ENCODE measurements at regions of chr4 and their contacts with region 1.

Region 1: DNA sequence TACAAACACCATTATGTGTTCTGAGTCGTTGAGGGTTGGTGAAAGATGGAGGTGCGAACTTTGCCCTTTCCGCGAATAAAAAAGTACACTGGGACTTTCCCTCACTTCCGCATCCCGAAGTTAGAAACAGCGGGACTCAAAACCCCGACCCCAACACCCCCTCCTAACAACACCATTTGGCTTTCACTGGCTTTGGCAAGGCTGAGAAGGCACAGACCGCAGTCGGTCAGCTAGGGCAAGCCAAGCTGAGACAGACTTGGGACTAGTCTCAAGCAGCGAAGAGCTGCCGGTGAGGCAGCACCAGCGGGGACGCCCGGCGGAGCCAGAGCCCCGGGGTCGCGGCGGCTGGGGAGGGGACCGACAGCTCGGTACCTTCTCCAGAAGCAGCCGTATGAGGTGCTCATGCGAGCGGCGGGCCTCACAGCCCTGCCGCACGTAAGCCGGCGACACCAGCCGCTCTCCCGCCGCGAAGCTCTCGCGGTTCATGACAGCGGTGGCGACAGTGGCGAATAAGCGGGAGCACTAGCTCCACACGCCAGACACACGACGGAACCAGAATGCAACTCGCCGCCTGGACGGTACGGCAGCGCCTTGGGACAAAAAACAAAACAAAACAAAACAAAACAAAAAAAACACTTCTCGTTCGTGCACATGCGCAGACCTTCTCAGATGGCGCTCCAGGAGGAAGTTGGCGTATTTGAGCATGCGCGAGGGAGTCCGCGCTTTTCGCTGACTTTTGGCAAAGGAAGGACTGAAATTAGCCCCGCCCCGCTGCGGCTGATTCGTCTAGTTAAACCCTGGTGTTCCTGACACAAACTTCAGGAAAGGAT is at the start of gene SEPSECS:
- DNase-seq: peak; percentile 97
- ATAC-seq: peak; percentile 87
- H3K4me3 Mint-ChIP-seq: peak within 1 kb of the TSS; percentile 83
- H3K27ac Mint-ChIP-seq: peak within 1 kb of the TSS; percentile 90
- H3K4me1 Mint-ChIP-seq: peaks cover 42% of the 10 kb centered on the region
- H3K27me3 Mint-ChIP-seq: no peaks in the 10 kb centered on the region
- total RNA-seq, gene SEPSECS: 12.9 TPM

Region 2: DNA sequence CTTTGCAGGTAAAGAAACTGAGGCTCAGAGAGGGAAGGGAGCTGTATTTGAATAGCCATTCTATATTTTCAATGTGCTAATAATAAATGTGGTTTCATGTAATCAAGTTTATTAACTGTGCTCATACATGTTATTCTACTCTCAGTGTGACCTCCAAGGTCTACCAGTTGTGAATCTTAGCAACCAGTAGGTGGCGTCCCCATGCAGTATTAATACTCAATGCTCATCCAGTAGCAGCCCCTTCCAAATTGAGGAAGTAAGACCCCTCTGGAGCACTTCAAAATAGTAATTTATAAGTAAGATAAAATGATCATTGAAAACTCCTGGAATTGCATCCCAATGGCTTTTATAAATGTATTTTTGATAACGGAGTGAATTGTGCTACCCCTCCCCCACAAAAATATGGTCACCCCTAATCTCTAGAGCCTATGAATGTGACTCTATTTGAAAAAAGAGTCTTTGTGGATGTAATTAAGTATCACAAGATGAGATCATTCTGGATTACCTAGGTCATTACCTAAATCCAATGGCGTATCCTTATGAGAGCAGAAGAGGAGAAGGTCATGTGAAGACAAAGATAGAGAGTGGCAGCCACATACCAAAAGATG is 20.5 kb after region 1 on chr4:
- CTCF ChIA-PET with region 1: interaction called, 10 read pairs
- DNase-seq: peak; percentile 49
- ATAC-seq: peak; percentile 71
- H3K4me3 Mint-ChIP-seq: no peak overlapping the region
- H3K27ac Mint-ChIP-seq: no peak overlapping the region
- H3K4me1 Mint-ChIP-seq: peaks cover 3% of the 10 kb centered on the region
- H3K27me3 Mint-ChIP-seq: no peaks in the 10 kb centered on the region

Region 3: GRCh38 chr4:25234390-25235370 is 74.6 kb after region 1 on chr4:
- CTCF ChIA-PET with region 1: interaction called, 30 read pairs
- DNase-seq: peak; percentile 63
- ATAC-seq: peak; percentile 42
- H3K4me3 Mint-ChIP-seq: peak overlapping the region; percentile 93
- H3K27ac Mint-ChIP-seq: peak overlapping the region; percentile 95
- H3K4me1 Mint-ChIP-seq: peaks cover 41% of the 10 kb centered on the region
- H3K27me3 Mint-ChIP-seq: no peaks in the 10 kb centered on the region